ENCODE measurements at regions of chr3 and their contacts with region 1.

Region 1: GRCh38 chr3:117019082-117019713 is 309.6 kb downstream of the TUSC7 start:
- DNase-seq: peak; percentile 41 to 93 (median 84)

Region 2: DNA sequence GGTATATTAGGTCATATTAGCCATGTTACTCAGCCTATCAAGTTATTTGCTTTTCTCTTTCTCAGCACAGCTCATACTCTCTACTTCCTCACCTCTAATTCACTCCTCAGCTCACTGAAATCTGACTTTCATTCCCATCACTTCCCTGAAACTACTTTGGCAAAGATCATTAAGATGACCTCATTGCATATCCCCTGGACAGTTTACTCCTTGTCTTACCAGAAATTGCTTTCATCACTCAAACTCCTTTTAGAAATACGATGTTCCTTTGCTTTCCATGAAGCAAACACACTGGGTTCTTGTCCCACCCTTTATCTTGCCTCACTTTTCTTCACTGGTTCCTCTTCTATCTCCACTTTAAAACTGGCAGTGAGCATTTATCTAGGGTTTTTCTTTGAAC is 44.7 kb after region 1 on chr3:
- intact Hi-C with region 1: no loop called
- DNase-seq: no peak

Region 3: DNA sequence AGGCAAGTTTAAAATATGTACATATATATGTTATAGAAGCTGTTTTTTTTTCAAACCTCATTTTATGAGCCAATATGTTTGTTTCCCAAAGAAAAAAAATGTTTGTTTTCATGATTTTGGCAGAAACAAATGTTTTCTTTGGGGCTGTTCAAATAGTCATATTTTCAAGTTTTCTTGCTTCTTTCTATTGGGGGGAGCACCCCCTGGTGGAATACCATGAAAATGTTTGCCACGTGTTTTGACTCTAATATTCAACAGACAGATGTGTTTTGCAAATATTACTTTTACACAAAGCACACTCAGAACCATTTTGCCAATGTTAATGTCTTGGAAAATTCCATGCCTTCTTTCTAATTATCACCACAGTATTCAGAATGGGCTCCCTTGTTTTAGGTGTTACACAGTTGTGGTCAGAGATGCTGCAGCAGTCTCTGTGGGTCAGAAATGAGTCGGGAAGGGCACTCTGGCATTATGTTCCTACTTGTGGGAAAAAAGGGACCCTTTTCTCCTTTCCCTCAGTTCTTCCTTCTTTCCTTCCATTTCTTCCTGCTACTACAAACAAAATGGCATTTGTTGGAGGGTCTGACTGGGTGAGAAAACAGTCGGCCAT is 507.4 kb after region 1 on chr3:
- intact Hi-C with region 1: loop called (anchors 5 kb)
- DNase-seq: peak in 37 of 42 donors; percentile 13 to 87 (median 64)

Measured in head of caudate nucleus (tissue), 42 donors.